ENCODE measurements at regions of chr16 and their contacts with region 1.

Region 1: DNA sequence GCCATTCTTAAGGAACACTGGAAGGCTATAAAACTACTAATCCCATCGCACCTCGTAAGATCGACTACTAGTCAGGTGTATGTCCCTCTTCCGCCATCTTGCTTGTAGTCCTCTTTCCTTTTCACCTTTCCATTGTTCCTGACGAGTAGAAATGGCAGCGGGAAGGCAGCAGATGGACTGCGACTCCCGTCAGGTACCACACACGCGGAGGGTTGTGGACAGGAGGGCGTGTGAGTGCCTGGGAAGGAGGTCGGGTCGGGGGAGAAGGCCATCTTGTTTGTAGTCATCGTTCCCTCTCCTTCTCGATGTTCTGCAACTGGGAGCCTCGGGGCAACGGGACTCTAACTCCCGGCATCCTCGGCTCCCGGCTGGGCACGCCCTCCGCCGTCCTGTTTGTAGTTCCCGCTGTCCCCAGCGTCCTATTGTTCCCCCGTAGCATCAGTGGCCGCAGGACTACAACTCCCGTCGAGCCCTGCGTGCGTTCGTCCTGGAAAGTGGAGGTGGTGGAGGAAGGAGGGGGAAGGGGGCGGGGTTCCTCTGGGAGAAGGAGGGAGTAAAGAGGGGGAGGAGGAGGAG is 324 bp upstream of the FBXL19 start:
- DNase-seq: peak; percentile 90 to 99 (median 94)
- ATAC-seq: peak; percentile 66
- H3K4me3 ChIP-seq: peak overlapping the region; percentile 75 to 96
- H3K4me3 Mint-ChIP-seq: peak overlapping the region; percentile 99
- H3K27ac ChIP-seq: peak overlapping the region; percentile 73 to 92
- H3K27ac Mint-ChIP-seq: peak overlapping the region; percentile 99
- H3K4me1 ChIP-seq: peaks cover 14% of the 10 kb centered on the region
- H3K4me1 Mint-ChIP-seq: peaks cover 22% of the 10 kb centered on the region
- H3K27me3 ChIP-seq: no peaks in the 10 kb centered on the region
- H3K27me3 Mint-ChIP-seq: no peaks in the 10 kb centered on the region
- CTCF ChIP-seq: no peak

Region 2: DNA sequence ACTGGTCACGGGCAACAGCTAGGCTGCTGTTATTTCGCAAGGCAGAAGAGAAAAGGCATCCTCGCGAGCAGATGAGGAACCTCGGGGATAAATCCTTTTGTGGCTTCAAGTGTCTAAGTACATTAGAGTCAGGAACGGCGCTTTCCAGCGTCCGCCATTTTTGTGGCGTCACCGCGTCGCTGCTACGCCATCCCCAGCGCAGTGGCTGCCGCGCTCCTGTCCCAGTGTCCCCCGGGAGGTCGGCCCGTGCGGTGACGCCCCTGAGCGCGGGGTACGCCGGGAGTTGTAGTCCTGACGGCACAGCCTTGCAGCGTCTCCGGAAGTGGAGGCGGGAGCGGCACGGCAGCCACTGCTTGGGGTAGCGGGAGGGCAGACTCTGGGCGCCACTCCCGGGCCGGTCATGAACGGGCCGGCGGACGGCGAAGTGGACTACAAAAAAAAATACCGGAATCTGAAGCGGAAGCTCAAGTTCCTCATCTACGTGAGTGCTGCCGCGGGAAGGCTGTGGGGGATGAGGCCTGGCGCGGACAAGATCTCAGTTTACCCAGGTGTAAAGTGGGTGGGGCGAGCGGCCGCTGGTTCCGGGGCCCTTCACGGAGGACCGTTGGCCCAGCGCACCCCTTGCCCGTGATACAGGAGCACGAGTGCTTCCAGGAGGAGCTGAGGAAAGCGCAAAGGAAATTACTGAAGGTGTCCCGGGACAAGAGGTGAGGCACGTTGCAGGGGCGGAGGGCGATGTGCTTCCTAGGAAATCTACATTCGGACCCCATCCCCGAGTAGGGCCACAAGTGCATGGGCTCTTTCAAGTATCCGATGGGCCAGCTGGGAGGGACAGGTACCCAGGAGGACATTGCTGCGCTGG is 926.9 kb before region 1 on chr16 and contains the start of gene INO80E:
- CTCF ChIA-PET with region 1: no interaction called
- POLR2A ChIA-PET with region 1: no interaction called
- intact Hi-C with region 1: loop called in 1 of 2 experiments (anchors 2 kb)
- DNase-seq: peak; percentile 98 to 100 (median 99)
- ATAC-seq: peak; percentile 96
- H3K4me3 ChIP-seq: peak within 1 kb of the TSS; percentile 93 to 100
- H3K4me3 Mint-ChIP-seq: peak within 1 kb of the TSS; percentile 94
- H3K27ac ChIP-seq: peak within 1 kb of the TSS; percentile 99
- H3K27ac Mint-ChIP-seq: peak within 1 kb of the TSS; percentile 97
- H3K4me1 ChIP-seq: peaks cover 14% of the 10 kb centered on the region
- H3K4me1 Mint-ChIP-seq: peaks cover 39% of the 10 kb centered on the region
- H3K27me3 ChIP-seq: no peaks in the 10 kb centered on the region
- H3K27me3 Mint-ChIP-seq: no peaks in the 10 kb centered on the region
- CTCF ChIP-seq: no peak
- total RNA-seq, gene INO80E: 49.8 to 59.4 TPM

Region 3: DNA sequence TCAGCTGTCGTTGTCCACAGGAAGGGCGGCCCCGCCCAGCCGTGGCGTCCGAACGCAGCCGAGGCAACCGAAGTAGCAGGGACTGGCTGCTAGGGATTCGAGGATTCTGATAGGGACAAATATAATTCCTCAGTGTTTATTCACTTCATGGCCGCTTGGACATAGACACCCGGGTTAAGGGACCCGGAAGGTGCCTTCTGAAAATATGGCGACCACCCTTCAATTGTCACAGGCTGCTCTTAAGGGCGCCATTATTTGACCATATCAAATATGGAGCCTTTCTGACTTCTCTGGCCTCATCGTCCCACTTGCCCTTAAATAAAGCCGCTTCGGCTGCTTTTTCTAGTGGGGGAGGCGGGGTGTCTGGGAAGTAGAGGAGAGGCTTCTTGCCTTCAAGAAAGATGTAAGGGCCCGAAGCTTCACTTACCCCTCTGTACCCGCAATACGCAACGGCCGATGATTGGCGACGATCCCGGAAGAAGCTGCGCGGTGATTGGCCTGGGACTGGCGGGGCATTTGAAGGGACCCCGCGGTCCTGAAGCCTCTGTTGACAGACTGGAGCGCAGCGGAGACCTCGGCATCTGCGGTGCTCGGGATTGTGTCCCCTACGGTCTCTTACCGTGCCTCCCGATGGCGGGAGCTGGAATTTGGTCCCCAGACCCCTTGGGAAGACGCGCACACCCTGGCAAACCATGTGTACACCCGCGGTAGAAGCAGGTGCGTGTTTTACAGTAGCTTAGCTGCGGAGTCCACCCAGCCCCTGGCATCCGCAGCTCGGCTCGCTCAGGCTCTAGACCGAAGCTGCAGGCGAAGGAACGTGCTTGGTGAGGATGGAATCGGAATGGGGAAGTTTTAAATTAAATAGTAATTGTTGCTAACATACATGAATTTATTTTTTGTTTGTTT is 351.1 kb before region 1 on chr16 and contains the start of gene ZNF688:
- CTCF ChIA-PET with region 1: no interaction called
- POLR2A ChIA-PET with region 1: no interaction called
- intact Hi-C with region 1: loop called in 1 of 2 experiments (anchors 5 kb)
- DNase-seq: peak; percentile 89 to 99 (median 94)
- ATAC-seq: peak; percentile 81
- H3K4me3 ChIP-seq: peak within 1 kb of the TSS; percentile 85 to 86
- H3K4me3 Mint-ChIP-seq: peak within 1 kb of the TSS; percentile 90
- H3K27ac ChIP-seq: peak within 1 kb of the TSS; percentile 84 to 94
- H3K27ac Mint-ChIP-seq: peak within 1 kb of the TSS; percentile 98
- H3K4me1 ChIP-seq: peaks cover 40% of the 10 kb centered on the region
- H3K4me1 Mint-ChIP-seq: peaks cover 34% of the 10 kb centered on the region
- H3K27me3 ChIP-seq: no peaks in the 10 kb centered on the region
- H3K27me3 Mint-ChIP-seq: no peaks in the 10 kb centered on the region
- CTCF ChIP-seq: no peak
- total RNA-seq, gene ZNF688: 6.1 to 7.1 TPM

Region 4: DNA sequence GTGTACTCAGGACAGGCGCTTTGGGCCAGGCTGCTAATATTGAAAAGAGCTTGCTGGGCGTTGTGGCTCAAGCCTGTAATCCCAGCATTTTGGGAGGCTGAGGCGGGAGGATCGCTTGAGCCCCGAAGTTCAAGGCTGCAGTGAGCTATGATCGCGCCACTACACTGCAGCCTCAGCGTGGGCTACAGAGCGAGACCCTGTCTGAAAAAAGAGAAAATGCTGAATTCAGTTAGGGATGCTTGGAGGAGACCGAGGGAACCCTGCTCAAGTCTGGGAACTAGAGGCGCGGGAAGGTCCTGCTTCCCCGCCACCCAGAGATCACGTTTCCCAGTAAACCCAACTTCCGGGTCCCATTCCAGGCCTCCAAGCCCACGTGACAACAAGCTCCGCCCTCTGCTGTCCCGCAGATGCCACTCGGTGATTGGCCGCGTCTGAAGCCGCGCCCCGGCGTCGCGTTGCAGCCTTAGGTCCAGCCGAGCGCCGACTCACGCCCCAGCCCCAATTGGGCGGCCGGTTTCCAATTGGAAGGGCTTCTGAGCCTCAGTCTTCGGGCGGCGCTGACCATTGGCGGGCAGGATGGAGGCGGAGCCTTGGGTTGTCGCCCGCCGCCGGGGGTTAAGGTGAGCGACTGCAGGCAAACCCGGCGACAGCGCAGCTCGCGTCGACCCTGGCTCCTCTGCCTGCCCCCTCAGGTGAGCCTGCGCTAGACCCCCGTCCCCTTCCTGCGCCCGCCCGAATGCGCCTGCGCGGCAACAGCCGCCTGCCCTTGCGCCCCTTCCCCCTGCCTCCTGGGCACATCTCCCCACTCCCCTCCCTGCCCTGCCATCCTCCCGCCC is 175.0 kb before region 1 on chr16 and contains the start of gene PHKG2:
- CTCF ChIA-PET with region 1: no interaction called
- POLR2A ChIA-PET with region 1: no interaction called
- intact Hi-C with region 1: loop called (anchors 1 to 2 kb)
- DNase-seq: peak; percentile 88 to 99 (median 96)
- ATAC-seq: peak; percentile 93
- H3K4me3 ChIP-seq: peak within 1 kb of the TSS; percentile 59 to 68
- H3K4me3 Mint-ChIP-seq: peak within 1 kb of the TSS; percentile 89
- H3K27ac ChIP-seq: peak within 1 kb of the TSS; percentile 50 to 83
- H3K27ac Mint-ChIP-seq: peak within 1 kb of the TSS; percentile 66
- H3K4me1 ChIP-seq: peaks cover 12% of the 10 kb centered on the region
- H3K4me1 Mint-ChIP-seq: peaks cover 22% of the 10 kb centered on the region
- H3K27me3 ChIP-seq: no peaks in the 10 kb centered on the region
- H3K27me3 Mint-ChIP-seq: no peaks in the 10 kb centered on the region
- CTCF ChIP-seq: no peak
- total RNA-seq, gene PHKG2: 26.4 to 36.3 TPM

Region 5: DNA sequence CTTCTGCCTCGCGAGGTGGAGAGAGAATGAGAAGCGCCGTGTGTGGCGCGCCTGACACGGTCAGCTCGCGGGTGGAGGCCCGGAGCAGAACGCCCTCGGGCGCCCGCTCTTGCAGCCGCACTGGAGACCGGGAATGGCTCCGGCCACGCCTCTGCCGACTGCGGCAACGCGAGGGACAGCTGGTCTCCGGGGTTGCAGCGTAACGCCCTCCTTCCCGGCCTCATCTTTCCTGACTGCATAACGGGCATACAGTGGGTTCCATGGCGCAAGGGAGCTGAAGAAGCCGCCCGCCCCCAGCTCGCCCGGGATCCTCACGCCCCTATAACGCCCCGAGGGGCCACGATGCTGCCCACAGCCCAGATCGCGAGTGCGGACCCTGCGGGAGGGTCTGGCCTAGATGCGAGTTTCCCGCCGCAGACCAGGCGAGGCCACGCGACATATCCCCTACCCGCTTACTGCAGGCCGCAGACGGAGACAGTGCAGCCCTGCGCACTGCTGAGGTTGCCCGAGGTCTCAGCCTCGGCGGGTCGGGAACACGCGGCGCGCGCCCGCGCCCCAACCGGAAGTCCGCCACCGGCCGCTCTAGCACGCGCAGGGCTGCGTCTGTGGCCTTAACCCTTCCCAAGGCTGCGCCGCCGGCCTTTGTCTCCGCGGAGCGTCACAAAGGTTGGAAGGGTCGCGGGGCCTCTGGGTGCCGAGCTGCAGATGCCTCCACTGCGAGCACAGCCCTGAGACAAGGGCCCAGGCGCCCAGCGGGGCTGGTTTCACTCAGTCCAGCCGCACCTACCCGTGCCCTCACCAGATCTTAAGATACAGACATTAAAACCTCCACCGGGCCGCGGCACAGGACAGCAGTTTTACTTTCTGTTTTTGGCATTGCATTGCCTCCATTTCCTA is 48.0 kb before region 1 on chr16:
- CTCF ChIA-PET with region 1: interaction called, 3 read pairs
- POLR2A ChIA-PET with region 1: no interaction called
- intact Hi-C with region 1: loop called (anchors 1 kb)
- DNase-seq: peak; percentile 78 to 95 (median 89)
- ATAC-seq: peak; percentile 78
- H3K4me3 ChIP-seq: peak overlapping the region; percentile 87 to 97
- H3K4me3 Mint-ChIP-seq: peak overlapping the region; percentile 90
- H3K27ac ChIP-seq: peak overlapping the region; percentile 84 to 94
- H3K27ac Mint-ChIP-seq: peak overlapping the region; percentile 96
- H3K4me1 ChIP-seq: peaks cover 24% of the 10 kb centered on the region
- H3K4me1 Mint-ChIP-seq: peaks cover 29% of the 10 kb centered on the region
- H3K27me3 ChIP-seq: no peaks in the 10 kb centered on the region
- H3K27me3 Mint-ChIP-seq: no peaks in the 10 kb centered on the region
- CTCF ChIP-seq: no peak

Region 6: GRCh38 chr16:30912794-30913412 is 10.1 kb before region 1 on chr16:
- CTCF ChIA-PET with region 1: no interaction called
- POLR2A ChIA-PET with region 1: no interaction called
- intact Hi-C with region 1: no loop called
- DNase-seq: no peak
- ATAC-seq: no peak
- H3K4me3 ChIP-seq: no peak overlapping the region
- H3K4me3 Mint-ChIP-seq: no peak overlapping the region
- H3K27ac ChIP-seq: no peak overlapping the region
- H3K27ac Mint-ChIP-seq: no peak overlapping the region
- H3K4me1 ChIP-seq: peaks cover 3% of the 10 kb centered on the region
- H3K4me1 Mint-ChIP-seq: peaks cover 1% of the 10 kb centered on the region
- H3K27me3 ChIP-seq: no peaks in the 10 kb centered on the region
- H3K27me3 Mint-ChIP-seq: no peaks in the 10 kb centered on the region
- CTCF ChIP-seq: no peak

Region 7: DNA sequence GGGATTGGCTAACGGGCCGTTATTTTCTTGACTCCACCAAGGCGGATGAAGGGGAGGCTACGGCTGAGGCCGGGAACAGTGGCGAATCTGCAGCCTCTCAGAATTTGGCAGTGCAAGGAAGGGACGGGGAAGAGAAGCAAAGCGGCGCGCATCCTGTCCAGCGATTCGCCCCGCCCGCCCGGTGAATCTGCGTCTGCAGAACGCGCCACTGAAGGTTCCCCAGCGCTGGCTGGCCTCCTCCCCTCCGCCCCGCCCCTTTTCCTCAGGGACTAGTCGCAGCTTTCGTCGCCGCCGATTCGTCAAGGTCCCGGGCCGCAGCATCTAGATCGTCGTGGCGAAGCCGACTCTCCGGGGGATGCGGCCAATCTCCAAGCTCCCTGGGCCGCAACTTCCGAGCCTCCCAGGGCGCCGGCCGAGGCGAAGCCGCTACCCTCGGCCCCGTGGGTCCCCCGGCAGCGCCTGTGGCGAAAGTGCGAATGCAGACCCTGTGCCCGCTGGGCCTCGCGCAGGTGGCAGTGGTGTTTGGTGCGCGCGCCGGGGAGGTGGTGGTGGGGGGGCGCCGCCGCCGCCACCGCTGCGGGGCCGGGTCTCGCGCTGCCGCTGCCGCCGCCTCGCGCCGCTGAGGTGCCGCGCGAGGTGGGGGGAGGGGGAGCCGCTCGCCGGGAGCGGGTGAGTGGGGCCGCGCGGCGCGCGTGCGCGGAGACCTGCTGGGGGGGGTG is 34.6 kb after region 1 on chr16 and contains the start of gene SETD1A:
- CTCF ChIA-PET with region 1: interaction called, 3 read pairs
- POLR2A ChIA-PET with region 1: no interaction called
- intact Hi-C with region 1: loop called (anchors 1 kb)
- DNase-seq: peak; percentile 91 to 99 (median 98)
- ATAC-seq: peak; percentile 86
- H3K4me3 ChIP-seq: peak within 1 kb of the TSS; percentile 88 to 97
- H3K4me3 Mint-ChIP-seq: peak within 1 kb of the TSS; percentile 95
- H3K27ac ChIP-seq: peak within 1 kb of the TSS; percentile 93 to 98
- H3K27ac Mint-ChIP-seq: peak within 1 kb of the TSS; percentile 98
- H3K4me1 ChIP-seq: peaks cover 27% of the 10 kb centered on the region
- H3K4me1 Mint-ChIP-seq: peaks cover 31% of the 10 kb centered on the region
- H3K27me3 ChIP-seq: no peaks in the 10 kb centered on the region
- H3K27me3 Mint-ChIP-seq: no peaks in the 10 kb centered on the region
- CTCF ChIP-seq: no peak
- total RNA-seq, gene SETD1A: 43.6 to 48.3 TPM

Region 8: DNA sequence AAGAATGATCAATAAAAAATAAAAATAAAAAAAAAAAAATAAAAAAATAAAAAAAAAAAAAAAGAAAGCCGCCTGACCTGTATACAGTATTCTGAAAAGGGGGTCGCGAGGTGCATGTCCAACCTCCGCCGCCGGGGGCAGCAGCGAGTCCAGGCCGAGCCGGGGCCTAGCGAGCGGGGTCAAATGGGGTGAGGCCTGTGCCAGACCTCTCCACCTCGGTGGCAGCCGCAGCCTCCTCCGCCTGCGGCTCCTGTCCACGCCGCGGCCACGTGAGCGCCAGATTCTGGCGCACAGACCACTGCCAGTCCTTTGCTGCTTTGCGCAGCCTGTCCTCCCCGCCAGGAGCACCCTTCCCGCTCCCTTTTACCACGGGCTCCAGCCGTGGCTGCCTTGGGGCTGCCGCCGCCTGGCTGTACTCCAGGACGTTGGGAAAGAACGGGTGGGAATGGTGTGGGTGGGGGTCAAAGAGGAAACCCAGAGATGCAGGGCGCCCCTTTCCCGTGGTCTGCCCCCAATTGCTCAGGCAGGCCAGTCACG is 182.7 kb after region 1 on chr16:
- CTCF ChIA-PET with region 1: no interaction called
- POLR2A ChIA-PET with region 1: no interaction called
- intact Hi-C with region 1: no loop called
- DNase-seq: peak; percentile 66 to 88 (median 82)
- ATAC-seq: peak; percentile 86
- H3K4me3 ChIP-seq: no peak overlapping the region
- H3K4me3 Mint-ChIP-seq: peak overlapping the region; percentile 35
- H3K27ac ChIP-seq: no peak overlapping the region
- H3K27ac Mint-ChIP-seq: no peak overlapping the region
- H3K4me1 ChIP-seq: peaks cover 15% of the 10 kb centered on the region
- H3K4me1 Mint-ChIP-seq: peaks cover 17% of the 10 kb centered on the region
- H3K27me3 ChIP-seq: no peaks in the 10 kb centered on the region
- H3K27me3 Mint-ChIP-seq: no peaks in the 10 kb centered on the region
- CTCF ChIP-seq: peak; percentile 85

Region 9: DNA sequence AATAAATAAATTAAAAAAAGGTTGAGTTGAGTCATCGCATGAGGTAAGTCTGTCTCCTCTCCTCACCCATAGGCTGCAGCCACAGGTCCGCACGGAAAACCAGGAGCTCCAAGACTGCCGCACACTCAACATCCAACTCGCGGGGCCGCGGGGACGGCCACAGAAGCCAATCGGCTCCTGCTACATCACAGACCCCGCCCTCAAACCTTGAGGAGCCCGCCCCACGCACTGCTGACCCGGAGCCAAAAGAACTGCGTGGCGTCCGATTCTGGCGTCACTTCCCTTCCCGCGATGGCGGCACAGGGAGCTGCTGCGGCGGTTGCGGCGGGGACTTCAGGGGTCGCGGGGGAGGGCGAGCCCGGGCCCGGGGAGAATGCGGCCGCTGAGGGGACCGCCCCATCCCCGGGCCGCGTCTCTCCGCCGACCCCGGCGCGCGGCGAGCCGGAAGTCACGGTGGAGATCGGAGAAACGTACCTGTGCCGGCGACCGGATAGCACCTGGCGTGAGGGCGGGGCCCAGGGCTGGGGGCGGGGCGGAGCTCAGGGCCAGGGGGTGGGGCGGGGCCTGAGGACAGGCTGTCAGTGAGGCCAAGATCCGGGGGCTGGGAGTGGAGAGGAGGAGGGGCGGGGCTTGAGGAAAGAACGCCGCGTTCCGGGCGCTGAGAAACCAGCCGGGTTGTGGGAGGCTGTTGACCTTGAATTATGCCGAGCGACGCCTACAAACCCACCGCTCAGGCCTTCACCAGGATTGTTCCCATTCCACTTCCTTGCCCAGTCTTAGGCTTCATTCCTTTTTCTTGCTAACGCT is 194.5 kb after region 1 on chr16 and contains the start of gene KAT8:
- CTCF ChIA-PET with region 1: no interaction called
- POLR2A ChIA-PET with region 1: no interaction called
- intact Hi-C with region 1: loop called in 1 of 2 experiments (anchors 1 kb)
- DNase-seq: peak; percentile 92 to 99 (median 97)
- ATAC-seq: peak; percentile 92
- H3K4me3 ChIP-seq: peak within 1 kb of the TSS; percentile 53 to 93
- H3K4me3 Mint-ChIP-seq: peak within 1 kb of the TSS; percentile 74
- H3K27ac ChIP-seq: peak within 1 kb of the TSS; percentile 83 to 96
- H3K27ac Mint-ChIP-seq: peak within 1 kb of the TSS; percentile 95
- H3K4me1 ChIP-seq: peaks cover 11% of the 10 kb centered on the region
- H3K4me1 Mint-ChIP-seq: peaks cover 18% of the 10 kb centered on the region
- H3K27me3 ChIP-seq: no peaks in the 10 kb centered on the region
- H3K27me3 Mint-ChIP-seq: no peaks in the 10 kb centered on the region
- CTCF ChIP-seq: no peak
- total RNA-seq, gene KAT8: 105 to 107 TPM

Measured in CD8-positive, alpha-beta T cell (primary cell).